Activated CD4-positive, alpha-beta T cell treated with anti-CD3 and anti-CD28 coated beads, Interleukin-2, amount 10 ng/mL, durations not matched to agents 24 days and 14 days (primary cell): ENCODE measurements at regions of chr22 and their contacts with region 1.

Region 1: GRCh38 chr22:17084554-17085276 is at the start of gene IL17RA:
- DNase-seq: peak; percentile 99
- H3K4me3 Mint-ChIP-seq: peak within 1 kb of the TSS; percentile 90
- H3K27ac Mint-ChIP-seq: peak within 1 kb of the TSS; percentile 89
- H3K4me1 Mint-ChIP-seq: peaks cover 43% of the 10 kb centered on the region
- H3K27me3 Mint-ChIP-seq: peaks cover 5% of the 10 kb centered on the region
- total RNA-seq, gene IL17RA: 18.4 and 19.8 TPM in 2 replicates

Region 2: GRCh38 chr22:16970446-16970845 is 114.3 kb before region 1 on chr22:
- intact Hi-C with region 1: no loop called
- DNase-seq: peak; percentile 68
- H3K4me3 Mint-ChIP-seq: no peak overlapping the region
- H3K27ac Mint-ChIP-seq: peak overlapping the region; percentile 27
- H3K4me1 Mint-ChIP-seq: peaks cover 6% of the 10 kb centered on the region
- H3K27me3 Mint-ChIP-seq: no peaks in the 10 kb centered on the region

Region 3: DNA sequence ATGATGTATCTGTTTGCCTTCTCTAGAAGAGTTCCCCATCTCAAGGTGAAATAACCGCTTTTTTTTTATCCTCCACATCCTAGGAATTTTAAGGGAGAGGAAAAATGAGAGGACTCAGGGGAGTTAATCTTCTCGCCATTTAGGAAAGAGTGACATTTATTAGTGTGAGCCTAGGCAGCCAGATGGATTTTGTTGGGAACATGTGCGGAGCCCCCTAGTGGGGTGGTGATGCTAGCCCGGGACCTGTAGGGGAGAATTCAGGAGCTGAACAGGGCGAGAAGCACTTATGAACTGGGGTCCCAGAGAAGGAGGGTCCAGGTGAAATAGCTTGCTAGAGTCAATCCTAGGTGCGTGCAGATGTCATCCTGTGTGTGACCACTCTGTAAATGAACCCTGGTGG is 10.8 kb after region 1 on chr22:
- intact Hi-C with region 1: loop called (anchors 1 kb)
- DNase-seq: no peak
- H3K4me3 Mint-ChIP-seq: no peak overlapping the region
- H3K27ac Mint-ChIP-seq: no peak overlapping the region
- H3K4me1 Mint-ChIP-seq: peaks cover 80% of the 10 kb centered on the region
- H3K27me3 Mint-ChIP-seq: no peaks in the 10 kb centered on the region

Region 4: DNA sequence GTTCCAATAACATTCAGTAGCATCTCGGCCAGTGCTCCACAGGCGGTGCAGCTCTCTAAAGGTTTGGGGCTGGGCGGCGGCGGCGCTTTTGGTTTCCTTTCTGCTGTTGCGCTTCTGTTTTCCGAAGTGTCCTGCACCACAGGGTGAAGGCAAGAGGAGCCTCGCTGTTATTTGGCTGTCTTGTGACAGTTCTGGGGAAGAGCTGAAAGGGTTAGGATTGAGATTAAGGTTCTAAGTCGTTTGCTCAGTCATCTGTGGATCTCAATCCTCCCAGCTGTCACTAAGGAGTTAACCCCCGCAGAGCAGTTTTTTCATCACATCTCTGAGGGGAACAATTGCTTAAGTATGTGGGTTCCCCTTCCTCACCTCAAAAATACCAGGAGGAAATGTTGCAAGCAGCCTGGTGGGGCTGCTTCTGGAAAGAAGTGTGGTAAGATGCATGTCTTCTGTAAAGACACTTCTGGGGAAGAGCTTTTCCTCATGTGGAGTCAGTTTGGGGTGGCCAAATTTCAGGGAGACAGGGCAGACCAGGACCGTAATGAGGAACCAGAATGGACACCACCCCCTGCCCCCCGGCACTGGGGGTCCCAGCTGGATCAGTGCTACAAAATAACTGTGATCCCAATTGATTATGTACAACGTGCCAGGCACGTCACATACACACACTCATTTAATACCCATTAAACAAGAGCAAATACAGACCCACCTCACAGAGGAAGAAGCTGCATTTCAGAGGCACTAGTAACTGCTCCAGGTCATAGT is 22.3 kb after region 1 on chr22:
- intact Hi-C with region 1: no loop called
- DNase-seq: peak; percentile 84
- H3K4me3 Mint-ChIP-seq: peak overlapping the region; percentile 76
- H3K27ac Mint-ChIP-seq: peak overlapping the region; percentile 72
- H3K4me1 Mint-ChIP-seq: peaks cover 51% of the 10 kb centered on the region
- H3K27me3 Mint-ChIP-seq: no peaks in the 10 kb centered on the region

Region 5: GRCh38 chr22:17121227-17122195 is 36.8 kb after region 1 on chr22 and contains the start of gene TMEM121B:
- intact Hi-C with region 1: loop called (anchors 2 kb)
- DNase-seq: peak; percentile 73
- H3K4me3 Mint-ChIP-seq: peak within 1 kb of the TSS; percentile 79
- H3K27ac Mint-ChIP-seq: no peak within 1 kb of the TSS
- H3K4me1 Mint-ChIP-seq: peaks cover 32% of the 10 kb centered on the region
- H3K27me3 Mint-ChIP-seq: peaks cover 27% of the 10 kb centered on the region
- total RNA-seq, gene TMEM121B: 0.16 and 0.17 TPM in 2 replicates

Region 6: GRCh38 chr22:17143826-17144225 is 59.1 kb after region 1 on chr22:
- intact Hi-C with region 1: no loop called
- DNase-seq: no peak
- H3K4me3 Mint-ChIP-seq: no peak overlapping the region
- H3K27ac Mint-ChIP-seq: no peak overlapping the region
- H3K4me1 Mint-ChIP-seq: peaks cover 2% of the 10 kb centered on the region
- H3K27me3 Mint-ChIP-seq: no peaks in the 10 kb centered on the region

Region 7: DNA sequence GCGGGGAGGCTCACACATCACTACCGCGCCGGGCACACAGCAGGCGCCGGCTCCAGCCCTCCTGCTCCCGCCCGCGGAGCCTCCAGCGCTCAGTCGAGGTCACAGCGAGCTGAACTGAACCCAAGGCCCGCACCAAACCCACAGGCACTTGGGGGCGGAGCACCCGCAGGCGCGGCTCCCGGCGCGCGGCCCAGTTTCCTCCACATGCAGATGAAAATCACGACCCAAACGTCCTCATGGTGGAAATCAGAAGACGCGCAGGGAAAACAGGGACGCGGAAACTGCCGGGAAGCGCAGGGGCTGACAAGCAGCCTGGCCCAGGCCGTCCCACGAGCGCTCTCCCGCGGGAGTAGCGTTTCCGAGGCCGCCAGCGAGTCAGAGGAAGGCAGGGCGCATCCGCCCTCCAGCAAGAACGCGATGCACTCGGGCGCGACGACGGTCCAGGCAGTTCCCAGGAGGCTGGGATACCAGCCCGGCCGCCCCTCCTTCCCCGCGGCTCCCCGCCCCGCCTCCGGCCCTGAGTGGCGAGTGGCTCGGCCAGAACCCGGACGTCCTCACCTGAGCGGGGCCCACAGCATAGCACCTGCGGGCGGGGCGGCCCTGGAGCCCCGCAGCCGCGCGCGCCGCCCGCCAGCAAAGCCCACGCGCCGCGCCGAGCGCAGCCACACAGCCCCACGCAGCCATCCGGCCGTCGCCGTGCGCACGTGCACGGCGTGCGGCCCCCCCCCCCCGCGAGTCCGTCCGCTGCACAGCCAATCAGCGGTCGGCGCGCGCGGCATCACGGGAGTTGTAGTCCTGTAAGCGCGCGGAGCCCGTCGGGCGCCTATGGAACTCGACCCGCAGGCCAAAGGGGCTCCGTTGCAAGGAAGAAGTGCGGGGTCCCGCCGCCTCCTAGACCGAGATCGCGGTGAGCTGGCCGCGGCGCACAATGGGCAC is 74.1 kb after region 1 on chr22 and contains the start of gene HDHD5:
- intact Hi-C with region 1: loop called (anchors 1 kb)
- DNase-seq: peak; percentile 96
- H3K4me3 Mint-ChIP-seq: peak within 1 kb of the TSS; percentile 89
- H3K27ac Mint-ChIP-seq: peak within 1 kb of the TSS; percentile 89
- H3K4me1 Mint-ChIP-seq: peaks cover 24% of the 10 kb centered on the region
- H3K27me3 Mint-ChIP-seq: peaks cover 2% of the 10 kb centered on the region
- total RNA-seq, gene HDHD5: 47.4 and 49.5 TPM in 2 replicates

Region 8: DNA sequence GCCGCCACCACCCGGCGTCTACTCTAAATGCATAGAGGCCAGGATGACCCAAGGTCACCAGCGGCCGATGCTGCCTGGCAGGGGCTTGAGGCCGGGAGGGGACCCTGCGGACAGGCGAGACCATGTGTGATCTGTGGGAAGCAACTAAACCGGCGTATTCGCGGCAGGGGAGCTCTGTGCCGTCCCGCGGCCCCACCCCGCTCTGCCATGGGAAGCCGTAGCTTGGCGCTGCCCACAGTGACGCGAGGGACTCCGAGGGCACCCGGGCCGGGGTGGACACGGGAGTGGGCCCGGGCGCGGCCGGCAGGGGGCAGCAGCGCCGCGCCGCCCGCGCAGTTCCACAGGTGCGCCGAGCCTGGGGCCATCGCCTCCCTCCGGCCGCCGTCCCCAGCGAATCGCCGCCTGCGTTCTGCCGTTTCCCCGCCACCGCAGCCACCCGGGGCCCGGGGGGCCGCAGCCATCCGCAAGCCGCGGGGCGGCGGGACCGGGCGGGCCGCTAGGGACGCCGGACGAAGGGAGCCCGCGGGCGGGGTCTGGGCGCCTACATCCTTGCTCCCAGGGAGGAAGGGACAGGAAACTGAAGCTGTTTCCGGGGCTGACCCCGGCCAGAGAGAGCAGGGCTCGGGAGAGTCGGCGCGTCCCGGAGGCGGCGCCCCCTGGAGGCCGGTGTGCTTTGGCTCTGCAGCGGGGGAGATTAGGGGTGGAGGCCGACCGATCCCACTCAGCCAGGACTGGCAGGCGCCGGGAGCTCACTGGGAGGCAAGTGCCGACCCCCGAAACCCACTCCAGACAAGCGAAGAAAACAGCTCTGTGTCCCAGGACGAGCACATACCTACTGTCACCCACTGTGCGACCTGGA is 86.8 kb after region 1 on chr22:
- intact Hi-C with region 1: loop called (anchors 1 kb)
- DNase-seq: peak; percentile 94
- H3K4me3 Mint-ChIP-seq: peak overlapping the region; percentile 87
- H3K27ac Mint-ChIP-seq: peak overlapping the region; percentile 46
- H3K4me1 Mint-ChIP-seq: peaks cover 6% of the 10 kb centered on the region
- H3K27me3 Mint-ChIP-seq: peaks cover 8% of the 10 kb centered on the region

Region 9: DNA sequence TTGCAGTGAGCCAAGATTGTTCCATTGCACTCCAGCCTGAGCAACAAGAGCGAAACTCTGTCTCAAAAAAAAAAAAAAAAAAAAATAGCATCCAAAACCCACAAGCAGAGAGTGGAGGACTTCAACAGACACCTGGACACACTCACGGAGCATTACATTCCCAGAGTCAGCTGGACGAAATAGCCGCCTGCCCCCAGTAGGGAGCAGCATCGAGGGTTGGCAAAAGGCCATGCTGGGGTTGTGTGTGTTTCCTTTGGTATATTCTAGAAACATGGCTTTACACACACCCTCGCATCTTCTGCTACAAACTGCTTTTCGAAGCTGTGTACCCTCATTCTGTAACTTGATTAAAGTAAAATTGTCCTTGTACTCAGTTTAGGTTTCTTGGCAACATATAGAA is 129.3 kb after region 1 on chr22:
- intact Hi-C with region 1: loop called (anchors 5 kb)
- DNase-seq: peak; percentile 84
- H3K4me3 Mint-ChIP-seq: no peak overlapping the region
- H3K27ac Mint-ChIP-seq: no peak overlapping the region
- H3K4me1 Mint-ChIP-seq: peaks cover 27% of the 10 kb centered on the region
- H3K27me3 Mint-ChIP-seq: no peaks in the 10 kb centered on the region

Region 10: GRCh38 chr22:17339095-17339693 is 254.5 kb after region 1 on chr22:
- intact Hi-C with region 1: no loop called
- DNase-seq: no peak
- H3K4me3 Mint-ChIP-seq: no peak overlapping the region
- H3K27ac Mint-ChIP-seq: no peak overlapping the region
- H3K4me1 Mint-ChIP-seq: no peaks in the 10 kb centered on the region
- H3K27me3 Mint-ChIP-seq: peaks cover 18% of the 10 kb centered on the region

Region 11: DNA sequence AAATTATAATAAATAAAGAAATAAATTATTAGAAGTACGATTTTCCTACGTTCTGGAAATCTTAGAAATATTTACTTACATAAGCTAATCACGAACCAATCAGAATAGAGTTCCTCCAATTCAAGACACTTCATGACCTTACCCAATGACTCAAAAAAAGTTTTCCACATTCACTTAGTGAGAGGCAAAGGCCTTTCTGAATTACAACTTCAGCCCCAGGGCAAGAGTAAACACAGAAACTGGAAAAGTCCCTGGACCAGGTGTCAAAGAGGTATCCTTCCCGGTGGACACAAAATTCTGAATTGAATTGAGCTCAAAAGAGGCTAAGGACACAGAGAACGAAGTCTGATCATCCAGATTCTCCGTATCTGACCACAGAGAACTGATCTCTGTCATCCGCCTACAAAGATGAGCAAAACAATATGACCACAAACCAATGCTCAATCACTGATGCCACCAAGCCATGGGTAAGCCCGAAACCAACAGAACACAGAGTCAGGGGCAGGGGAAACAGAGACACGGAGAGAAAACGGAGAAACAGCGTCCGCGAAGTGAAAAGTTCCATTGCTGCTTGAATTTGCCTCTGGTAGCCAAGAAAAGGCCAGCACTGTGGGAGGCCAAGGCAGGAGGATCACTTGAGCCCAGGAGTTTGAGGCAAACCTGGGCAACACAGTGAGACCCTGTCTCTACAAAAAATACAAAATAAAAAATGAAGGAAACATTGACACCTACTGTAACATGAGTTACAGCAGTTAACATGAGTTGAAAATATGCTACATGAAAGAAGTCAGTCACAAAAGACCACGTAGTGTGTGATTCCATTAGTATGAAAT is 682.7 kb after region 1 on chr22:
- intact Hi-C with region 1: loop called (anchors 5 kb)
- DNase-seq: peak; percentile 86
- H3K4me3 Mint-ChIP-seq: peak overlapping the region; percentile 40
- H3K27ac Mint-ChIP-seq: peak overlapping the region; percentile 63
- H3K4me1 Mint-ChIP-seq: peaks cover 33% of the 10 kb centered on the region
- H3K27me3 Mint-ChIP-seq: peaks cover 27% of the 10 kb centered on the region